Prostate gland (tissue), 2 donors: ENCODE measurements at regions of chr20 and their contacts with region 1.

Region 1: GRCh38 chr20:52242237-52243230 is 51.0 kb upstream of the ZFP64 start:
- DNase-seq: no peak
- H3K4me3 ChIP-seq: no peak overlapping the region
- H3K27ac ChIP-seq: no peak overlapping the region
- H3K4me1 ChIP-seq: no peaks in the 10 kb centered on the region
- H3K27me3 ChIP-seq: no peaks in the 10 kb centered on the region
- CTCF ChIP-seq: peak; percentile 31 to 82 (median 44)
- POLR2A ChIP-seq: no peak

Region 2: GRCh38 chr20:52676283-52676995 is 433.9 kb after region 1 on chr20:
- intact Hi-C with region 1: no loop called
- DNase-seq: no peak
- H3K4me3 ChIP-seq: no peak overlapping the region
- H3K27ac ChIP-seq: no peak overlapping the region
- H3K4me1 ChIP-seq: no peaks in the 10 kb centered on the region
- H3K27me3 ChIP-seq: no peaks in the 10 kb centered on the region
- CTCF ChIP-seq: no peak
- POLR2A ChIP-seq: no peak

Region 3: GRCh38 chr20:53216856-53217576 is 974.5 kb after region 1 on chr20:
- intact Hi-C with region 1: loop called (anchors 5 kb)
- DNase-seq: peak; percentile 65
- H3K4me3 ChIP-seq: peak overlapping the region; percentile 1 to 13
- H3K27ac ChIP-seq: no peak overlapping the region
- H3K4me1 ChIP-seq: no peaks in the 10 kb centered on the region
- H3K27me3 ChIP-seq: no peaks in the 10 kb centered on the region
- CTCF ChIP-seq: peak; percentile 78 to 92 (median 88)
- POLR2A ChIP-seq: no peak